ENCODE measurements at regions of chr11 and their contacts with region 1.

Region 1: DNA sequence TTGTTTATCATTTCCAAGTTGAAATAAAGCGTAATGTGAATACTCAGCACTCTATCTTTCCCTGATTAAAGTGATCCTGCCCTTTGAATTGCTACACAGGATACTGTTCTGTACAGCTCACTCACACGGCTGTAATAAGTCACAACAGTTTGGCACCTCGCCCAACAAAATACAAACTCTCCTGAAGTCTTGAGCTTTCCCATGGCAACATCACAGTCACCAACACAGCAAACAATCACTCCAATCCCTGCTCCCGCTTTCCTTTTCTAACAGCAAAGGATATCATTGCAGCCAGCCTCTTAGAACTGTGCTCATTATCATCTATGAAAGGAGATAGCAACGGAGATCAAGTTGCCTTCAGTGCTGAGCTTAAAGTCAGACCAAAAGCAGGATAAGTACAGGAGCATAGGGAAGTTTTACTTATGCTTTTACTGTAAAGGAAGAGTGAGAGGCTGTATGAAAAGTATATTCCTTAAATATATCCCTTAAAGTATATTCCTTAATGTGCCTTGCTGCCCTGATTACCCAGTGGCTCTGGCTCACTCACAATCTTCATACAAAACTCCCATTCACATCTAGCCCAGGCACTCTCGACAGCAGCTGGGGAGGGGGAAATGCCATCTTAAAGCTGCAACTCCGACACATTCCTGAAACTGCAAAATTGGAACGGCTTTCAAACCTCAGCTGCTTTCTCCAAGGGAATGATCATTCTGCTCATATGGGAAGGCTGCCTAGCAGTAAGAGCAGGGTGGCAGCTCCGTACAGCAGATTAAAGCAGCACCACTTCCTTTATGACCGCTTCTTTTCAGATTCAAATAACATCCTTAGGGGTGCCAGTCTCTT is 35.8 kb downstream of the MAML2 start:
- DNase-seq: no peak
- H3K4me3 Mint-ChIP-seq: peak overlapping the region; percentile 27
- H3K27ac Mint-ChIP-seq: peak overlapping the region; percentile 2
- H3K4me1 Mint-ChIP-seq: peaks cover 69% of the 10 kb centered on the region
- H3K27me3 Mint-ChIP-seq: no peaks in the 10 kb centered on the region

Region 2: DNA sequence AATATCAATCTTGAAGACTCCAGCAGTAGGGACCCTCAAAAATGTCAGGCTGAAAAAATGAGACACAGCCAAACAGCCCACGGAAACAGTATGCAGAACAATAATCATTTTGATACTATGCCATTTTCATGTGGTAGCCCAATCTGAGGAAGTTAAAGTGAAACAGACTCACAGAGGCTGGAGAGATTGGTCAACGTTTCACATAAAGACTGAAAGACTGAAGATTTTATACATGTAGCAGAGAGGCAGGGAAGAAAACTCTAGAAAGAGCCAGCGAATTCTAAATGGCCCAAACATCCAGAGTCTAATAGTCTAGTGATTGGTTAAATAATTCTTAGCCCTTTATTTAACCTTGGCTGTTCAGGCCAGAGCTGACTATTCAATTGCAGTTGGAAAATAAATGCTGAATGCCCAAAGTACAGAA is 13.5 kb before region 1 on chr11:
- CTCF ChIA-PET with region 1: interaction called, 3 read pairs
- POLR2A ChIA-PET with region 1: no interaction called
- intact Hi-C with region 1: loop called (anchors 2 kb)
- DNase-seq: no peak
- H3K4me3 Mint-ChIP-seq: no peak overlapping the region
- H3K27ac Mint-ChIP-seq: peak overlapping the region; percentile 0
- H3K4me1 Mint-ChIP-seq: peaks cover 71% of the 10 kb centered on the region
- H3K27me3 Mint-ChIP-seq: no peaks in the 10 kb centered on the region